BJ (cell line): ENCODE measurements at regions of chr10 and their contacts with region 1.

Region 1: GRCh38 chr10:117477961-117478670 is 64.4 kb upstream of the EMX2 start:
- DNase-seq: no peak
- H3K4me3 ChIP-seq: no peak overlapping the region
- H3K27me3 ChIP-seq: peaks cover under 1% of the 10 kb centered on the region
- CTCF ChIP-seq: peak; percentile 47

Region 2: DNA sequence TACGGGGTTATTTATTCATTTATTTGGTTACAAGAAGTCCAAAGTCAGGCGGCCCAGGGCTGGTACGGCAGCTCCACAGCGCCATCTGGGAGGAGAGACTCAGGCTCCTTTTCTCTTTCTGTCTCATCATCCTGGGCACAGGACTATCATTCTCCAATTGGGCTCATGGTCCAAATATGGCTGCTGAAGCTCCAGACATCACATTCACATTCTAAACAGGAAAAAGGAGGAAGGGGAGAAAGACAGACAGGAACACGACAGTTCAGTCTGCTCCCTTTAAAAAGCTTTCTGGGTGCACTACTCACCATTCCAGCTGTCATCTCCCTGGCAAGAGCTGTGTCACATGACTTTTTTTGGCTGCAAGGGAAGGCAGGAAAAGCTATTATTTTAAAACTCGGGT is 28.5 kb before region 1 on chr10:
- CTCF ChIA-PET with region 1: interaction called, 12 read pairs
- POLR2A ChIA-PET with region 1: no interaction called
- DNase-seq: no peak
- H3K4me3 ChIP-seq: no peak overlapping the region
- H3K27me3 ChIP-seq: peaks cover 2% of the 10 kb centered on the region
- CTCF ChIP-seq: no peak

Region 3: GRCh38 chr10:117461766-117462423 is 16.2 kb before region 1 on chr10:
- CTCF ChIA-PET with region 1: interaction called, 10 read pairs
- POLR2A ChIA-PET with region 1: interaction called, 5 read pairs
- DNase-seq: peak; percentile 98
- H3K4me3 ChIP-seq: no peak overlapping the region
- H3K27me3 ChIP-seq: no peaks in the 10 kb centered on the region
- CTCF ChIP-seq: no peak

Region 4: GRCh38 chr10:117699436-117700075 is 221.4 kb after region 1 on chr10:
- CTCF ChIA-PET with region 1: no interaction called
- POLR2A ChIA-PET with region 1: no interaction called
- DNase-seq: no peak
- H3K4me3 ChIP-seq: no peak overlapping the region
- H3K27me3 ChIP-seq: no peaks in the 10 kb centered on the region
- CTCF ChIP-seq: no peak

Region 5: DNA sequence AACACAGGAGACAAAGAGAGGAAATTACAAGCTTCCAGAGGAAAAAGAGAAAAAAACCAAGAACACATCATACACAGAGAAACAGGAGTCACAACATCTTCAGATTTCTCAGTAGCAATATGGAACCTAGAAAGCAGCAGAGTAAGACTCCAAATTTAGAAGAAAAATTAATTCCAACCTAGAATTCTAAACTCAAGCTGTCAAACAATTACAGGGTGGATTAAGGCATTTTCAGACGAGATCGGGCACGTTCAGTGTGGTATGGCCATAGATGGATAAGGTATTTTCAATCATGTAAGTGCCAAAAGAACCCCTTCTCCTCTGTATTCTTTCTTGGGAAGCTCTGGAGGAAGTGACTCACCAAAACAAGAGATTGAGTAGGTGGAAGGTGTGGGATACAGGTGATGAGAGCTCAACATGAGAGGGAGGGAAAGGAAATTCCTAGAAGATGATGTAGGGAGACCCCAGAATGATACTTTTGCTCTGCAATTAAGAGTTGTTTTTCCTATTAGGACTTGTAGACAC is 812.4 kb after region 1 on chr10:
- CTCF ChIA-PET with region 1: no interaction called
- POLR2A ChIA-PET with region 1: no interaction called
- DNase-seq: no peak
- H3K4me3 ChIP-seq: no peak overlapping the region
- H3K27me3 ChIP-seq: no peaks in the 10 kb centered on the region
- CTCF ChIP-seq: no peak